Naive thymus-derived CD4-positive, alpha-beta T cell (primary cell): ENCODE measurements at regions of chr1 and their contacts with region 1.

Region 1: GRCh38 chr1:179831852-179832699 is 45.5 kb downstream of the TOR1AIP2 start:
- DNase-seq: peak in 7 of 9 donors; percentile 63 to 80 (median 76)
- ATAC-seq: peak; percentile 84
- H3K4me3 ChIP-seq: peak overlapping the region; percentile 56
- H3K4me3 Mint-ChIP-seq: peak overlapping the region; percentile 63 to 81 (median 72)
- H3K27ac ChIP-seq: peak overlapping the region; percentile 59
- H3K27ac Mint-ChIP-seq: peak overlapping the region; percentile 52 to 95 (median 91)
- H3K4me1 ChIP-seq: peaks cover 16 to 37% of the 10 kb centered on the region in 2 donors
- H3K4me1 Mint-ChIP-seq: peaks cover 23 to 47% (median 38%) of the 10 kb centered on the region in 7 donors
- H3K27me3 ChIP-seq: no peaks in the 10 kb centered on the region
- H3K27me3 Mint-ChIP-seq: no peaks in the 10 kb centered on the region

Region 2: DNA sequence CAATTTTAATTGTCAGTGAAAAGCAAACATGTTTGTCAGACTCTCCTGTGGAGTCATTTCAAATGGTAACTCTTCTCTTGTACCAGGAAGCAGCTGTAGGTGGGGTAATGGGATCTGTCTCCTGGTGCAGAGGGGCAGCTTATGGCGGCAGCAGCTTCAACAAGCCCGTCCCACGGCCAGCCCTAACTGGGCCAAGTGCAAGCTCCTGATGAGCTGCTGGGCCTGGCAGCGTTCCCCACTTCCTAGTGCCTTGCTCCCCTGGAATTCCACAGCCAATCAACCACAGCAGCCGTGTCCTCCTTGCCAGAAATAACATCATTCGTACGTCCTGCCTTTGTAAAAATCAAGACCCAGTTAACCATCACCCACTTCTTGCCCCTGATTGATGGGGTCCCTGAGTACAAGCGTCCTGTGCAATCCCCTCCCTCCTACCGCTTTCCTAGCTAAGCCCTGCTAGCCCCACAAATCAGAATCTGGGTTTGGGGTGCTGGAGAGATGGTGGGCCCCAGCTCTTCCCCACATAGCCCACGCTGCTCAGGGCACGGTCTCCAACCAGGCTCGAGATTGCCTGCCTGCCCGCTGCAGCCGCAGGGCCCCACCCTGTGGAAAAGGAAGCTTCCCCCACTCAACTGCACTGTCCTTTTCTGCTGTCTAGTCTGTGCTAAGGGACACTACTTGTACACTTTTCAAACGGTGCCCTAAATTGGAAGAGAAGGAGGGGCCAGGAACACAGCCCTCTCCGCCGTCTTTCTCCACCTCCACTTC is 15.7 kb before region 1 on chr1:
- CTCF ChIA-PET with region 1: interaction called, 33 read pairs
- POLR2A ChIA-PET with region 1: interaction called, 66 read pairs
- intact Hi-C with region 1: loop called (anchors 1 kb)
- DNase-seq: no peak
- ATAC-seq: no peak
- H3K4me3 ChIP-seq: no peak overlapping the region
- H3K4me3 Mint-ChIP-seq: peak overlapping the region; percentile 34 to 98 (median 93)
- H3K27ac ChIP-seq: no peak overlapping the region
- H3K27ac Mint-ChIP-seq: peak overlapping the region in 7 of 9 donors; percentile 87 to 99 (median 95)
- H3K4me1 ChIP-seq: peaks cover 6 to 9% of the 10 kb centered on the region in 2 donors
- H3K4me1 Mint-ChIP-seq: peaks cover 10 to 25% (median 20%) of the 10 kb centered on the region in 7 donors
- H3K27me3 ChIP-seq: no peaks in the 10 kb centered on the region
- H3K27me3 Mint-ChIP-seq: peaks cover 0 to 15% (median 0%) of the 10 kb centered on the region in 5 donors

Region 3: DNA sequence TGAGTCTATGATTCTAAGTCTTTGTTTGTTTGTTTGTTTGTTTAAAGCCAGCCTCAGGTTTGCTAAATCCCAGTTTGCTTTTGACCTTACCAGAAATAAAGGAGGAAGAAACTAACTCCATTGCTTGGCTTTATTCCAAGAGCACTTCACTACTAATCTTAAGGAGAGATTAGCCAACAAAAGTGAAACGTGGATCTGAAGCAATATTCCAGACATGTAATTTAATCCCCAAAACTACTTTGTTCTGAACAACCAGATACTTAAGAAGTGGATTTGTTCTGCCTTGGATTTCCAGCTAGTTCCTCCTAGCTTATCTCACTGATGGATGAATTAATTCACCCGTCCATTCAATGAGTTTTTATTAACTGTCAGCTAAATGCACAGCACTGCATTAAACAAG is 106.7 kb after region 1 on chr1:
- CTCF ChIA-PET with region 1: no interaction called
- POLR2A ChIA-PET with region 1: no interaction called
- intact Hi-C with region 1: no loop called
- DNase-seq: no peak
- ATAC-seq: no peak
- H3K4me3 ChIP-seq: no peak overlapping the region
- H3K4me3 Mint-ChIP-seq: no peak overlapping the region
- H3K27ac ChIP-seq: no peak overlapping the region
- H3K27ac Mint-ChIP-seq: no peak overlapping the region
- H3K4me1 ChIP-seq: no peaks in the 10 kb centered on the region
- H3K4me1 Mint-ChIP-seq: peaks cover 0 to 2% (median 0%) of the 10 kb centered on the region in 7 donors
- H3K27me3 ChIP-seq: peaks cover 0 to 4% of the 10 kb centered on the region in 2 donors
- H3K27me3 Mint-ChIP-seq: peaks cover 0 to 42% (median 6%) of the 10 kb centered on the region in 5 donors